K562 (cell line): ENCODE measurements at regions of chr7 and their contacts with region 1.

Region 1: GRCh38 chr7:32761451-32762205 is 129.9 kb downstream of the KBTBD2 start:
- DNase-seq: no peak
- ATAC-seq: no peak
- H3K4me3 ChIP-seq: no peak overlapping the region
- H3K27ac ChIP-seq: no peak overlapping the region
- H3K4me1 ChIP-seq: peaks cover 0 to 3% of the 10 kb centered on the region in 2 experiments; a peak in 3 of 5 replicates
- H3K27me3 ChIP-seq: no peaks in the 10 kb centered on the region
- CTCF ChIP-seq: no peak
- EP300 ChIP-seq: no peak
- POLR2A ChIP-seq: no peak
- RAD21 ChIP-seq: no peak

Region 2: GRCh38 chr7:31633894-31634494 is 1127.6 kb before region 1 on chr7:
- CTCF ChIA-PET with region 1: no interaction called
- POLR2A ChIA-PET with region 1: no interaction called
- in situ Hi-C with region 1: no loop called
- intact Hi-C with region 1: no loop called
- DNase-seq: peak; percentile 26 to 56 (median 34)
- ATAC-seq: peak; percentile 91
- H3K4me3 ChIP-seq: no peak overlapping the region
- H3K27ac ChIP-seq: no peak overlapping the region
- H3K4me1 ChIP-seq: no peaks in the 10 kb centered on the region
- H3K27me3 ChIP-seq: no peaks in the 10 kb centered on the region
- CTCF ChIP-seq: peak; percentile 54 to 72 (median 68)
- EP300 ChIP-seq: no peak
- POLR2A ChIP-seq: no peak
- RAD21 ChIP-seq: peak; percentile 69 to 70

Region 3: DNA sequence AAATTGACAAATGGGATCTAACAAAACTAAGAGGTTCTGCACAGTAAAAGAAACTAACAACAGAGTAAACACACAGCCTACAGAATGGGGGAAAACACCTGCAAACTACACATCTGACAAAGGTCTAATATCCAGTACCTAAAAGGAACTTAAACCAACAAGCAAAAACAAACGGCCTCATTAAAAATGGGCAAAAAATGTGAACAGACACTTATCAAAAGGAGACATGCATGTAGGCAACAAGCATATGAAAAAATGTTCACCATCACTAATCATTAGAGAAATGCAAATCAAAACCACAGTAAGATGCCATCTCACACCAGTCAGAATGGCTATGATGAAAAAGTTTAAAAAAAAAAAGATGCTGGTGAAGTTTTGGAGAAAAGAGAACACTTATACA is 67.4 kb before region 1 on chr7:
- CTCF ChIA-PET with region 1: no interaction called
- POLR2A ChIA-PET with region 1: no interaction called
- in situ Hi-C with region 1: no loop called
- intact Hi-C with region 1: loop called (anchors 2 kb)
- DNase-seq: no peak
- ATAC-seq: no peak
- H3K4me3 ChIP-seq: no peak overlapping the region
- H3K27ac ChIP-seq: no peak overlapping the region
- H3K4me1 ChIP-seq: peaks cover 0 to 6% of the 10 kb centered on the region in 2 experiments; a peak in 1 of 5 replicates
- H3K27me3 ChIP-seq: no peaks in the 10 kb centered on the region
- CTCF ChIP-seq: no peak
- EP300 ChIP-seq: no peak
- POLR2A ChIP-seq: no peak
- RAD21 ChIP-seq: no peak

Region 4: DNA sequence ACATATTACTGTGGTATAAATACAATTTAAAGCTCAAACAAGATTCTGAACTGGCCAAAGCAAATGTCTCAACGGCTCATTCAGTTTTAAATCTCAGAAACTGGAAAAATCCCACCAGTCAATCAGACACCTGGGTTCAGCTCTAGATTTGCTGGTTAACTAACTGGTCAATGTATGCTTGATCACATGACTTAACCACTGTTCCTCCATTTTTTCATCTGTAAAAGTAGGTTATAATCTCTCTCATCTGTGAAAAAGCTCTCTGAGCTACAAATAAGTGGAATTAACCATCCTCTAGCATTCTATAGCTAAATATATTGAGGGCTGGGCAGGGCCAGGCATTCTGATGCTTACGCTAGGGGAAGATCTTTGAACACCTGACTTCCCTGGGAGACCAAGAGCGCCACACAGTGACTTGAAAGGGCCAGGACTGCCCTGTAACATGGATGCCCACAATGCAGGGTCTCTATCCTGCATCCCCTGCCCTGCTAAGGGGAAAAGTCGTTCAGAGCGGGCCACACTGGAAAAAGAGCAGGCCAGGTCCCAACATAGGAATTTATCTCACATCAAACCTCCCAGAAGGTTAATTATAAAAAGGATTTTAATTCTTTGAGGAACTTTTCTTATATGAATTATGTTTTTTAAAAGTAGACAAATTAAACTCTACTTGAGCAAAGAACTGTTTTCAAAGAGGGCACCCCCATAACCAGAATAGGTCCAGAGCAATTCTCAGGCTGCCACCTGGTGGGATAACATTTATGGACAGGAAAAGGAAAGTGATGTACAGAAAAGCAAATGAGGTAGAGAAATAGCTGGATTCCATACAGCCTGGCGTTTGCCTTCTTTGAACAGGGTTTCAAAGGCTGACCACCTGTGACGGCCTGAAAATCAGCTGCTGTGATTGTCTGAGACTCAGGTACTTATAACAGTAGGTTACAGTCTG is 345.8 kb after region 1 on chr7:
- CTCF ChIA-PET with region 1: interaction called, 5 read pairs
- POLR2A ChIA-PET with region 1: no interaction called
- in situ Hi-C with region 1: no loop called
- intact Hi-C with region 1: loop called (anchors 1 kb)
- DNase-seq: peak in 2 of 4 experiments; percentile 28 to 64
- ATAC-seq: peak; percentile 62
- H3K4me3 ChIP-seq: peak overlapping the region; percentile 99
- H3K27ac ChIP-seq: no peak overlapping the region
- H3K4me1 ChIP-seq: peaks cover 10 to 11% of the 10 kb centered on the region in 2 experiments; a peak in 4 of 5 replicates
- H3K27me3 ChIP-seq: no peaks in the 10 kb centered on the region
- CTCF ChIP-seq: peak; percentile 52 to 69 (median 64)
- EP300 ChIP-seq: no peak
- POLR2A ChIP-seq: no peak
- RAD21 ChIP-seq: peak; percentile 66 to 73